ENCODE measurements at regions of chr2 and their contacts with region 1.

Region 1: GRCh38 chr2:75403991-75404428 is 156.7 kb downstream of the EVA1A start:
- DNase-seq: no peak
- ATAC-seq: peak; percentile 61

Region 2: GRCh38 chr2:74919827-74920226 is 484.2 kb before region 1 on chr2:
- intact Hi-C with region 1: loop called (anchors 10 kb)
- DNase-seq: peak; percentile 80
- ATAC-seq: peak; percentile 30

Region 3: DNA sequence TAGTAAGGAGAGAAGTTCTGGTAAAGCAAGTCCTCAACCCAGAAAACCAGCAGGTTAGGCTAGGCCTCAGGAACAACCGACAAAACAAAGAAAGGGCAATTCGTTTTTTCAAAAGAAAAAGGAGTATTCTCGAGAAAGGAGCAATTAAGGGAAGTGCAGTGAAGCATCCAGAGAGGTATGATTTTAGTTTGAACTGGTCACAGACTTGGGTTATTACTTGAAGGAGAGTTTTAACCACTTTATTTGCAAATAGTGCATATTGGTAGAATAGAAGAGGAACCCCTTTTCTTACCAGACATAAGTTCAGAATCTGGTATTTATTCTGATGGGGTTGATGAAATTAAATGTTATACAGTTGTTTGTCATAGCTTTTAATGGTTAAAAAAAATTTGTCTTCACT is 416.7 kb after region 1 on chr2:
- intact Hi-C with region 1: no loop called
- DNase-seq: no peak
- ATAC-seq: no peak

Measured in sciatic nerve (tissue), 2 donors.